T-cell (primary cell): ENCODE measurements at regions of chr16 and their contacts with region 1.

Region 1: GRCh38 chr16:85010931-85011845 is at the start of gene ZDHHC7:
- DNase-seq: peak; percentile 67 to 94 (median 81)
- ATAC-seq: peak; percentile 93 to 96 (median 94)
- H3K4me3 ChIP-seq: peak within 1 kb of the TSS; percentile 97 to 98
- H3K4me3 Mint-ChIP-seq: peak within 1 kb of the TSS; percentile 95 to 97 (median 97)
- H3K27ac ChIP-seq: peak within 1 kb of the TSS; percentile 99
- H3K27ac Mint-ChIP-seq: peak within 1 kb of the TSS; percentile 97
- H3K4me1 ChIP-seq: peaks cover 5 to 24% of the 10 kb centered on the region in 2 experiments
- H3K4me1 Mint-ChIP-seq: peaks cover 40 to 45% (median 44%) of the 10 kb centered on the region in 3 donors
- H3K27me3 ChIP-seq: peaks cover 0 to 3% of the 10 kb centered on the region in 2 experiments
- H3K27me3 Mint-ChIP-seq: no peaks in the 10 kb centered on the region
- total RNA-seq, gene ZDHHC7: 33.5 to 43.9 (median 38.7) TPM

Region 2: GRCh38 chr16:84970447-84971127 is 40.6 kb before region 1 on chr16:
- CTCF ChIA-PET with region 1: interaction called in 1 of 2 experiments, 4 read pairs
- POLR2A ChIA-PET with region 1: interaction called in 1 of 2 experiments, 11 read pairs
- DNase-seq: peak; percentile 46 to 88 (median 70)
- ATAC-seq: peak; percentile 89 to 95 (median 94)
- H3K4me3 ChIP-seq: no peak overlapping the region
- H3K4me3 Mint-ChIP-seq: no peak overlapping the region
- H3K27ac ChIP-seq: no peak overlapping the region
- H3K27ac Mint-ChIP-seq: no peak overlapping the region
- H3K4me1 ChIP-seq: peaks cover 0 to 6% of the 10 kb centered on the region in 2 experiments
- H3K4me1 Mint-ChIP-seq: peaks cover 4 to 6% (median 4%) of the 10 kb centered on the region in 3 donors
- H3K27me3 ChIP-seq: peaks cover 0 to 10% of the 10 kb centered on the region in 2 experiments
- H3K27me3 Mint-ChIP-seq: no peaks in the 10 kb centered on the region

Region 3: DNA sequence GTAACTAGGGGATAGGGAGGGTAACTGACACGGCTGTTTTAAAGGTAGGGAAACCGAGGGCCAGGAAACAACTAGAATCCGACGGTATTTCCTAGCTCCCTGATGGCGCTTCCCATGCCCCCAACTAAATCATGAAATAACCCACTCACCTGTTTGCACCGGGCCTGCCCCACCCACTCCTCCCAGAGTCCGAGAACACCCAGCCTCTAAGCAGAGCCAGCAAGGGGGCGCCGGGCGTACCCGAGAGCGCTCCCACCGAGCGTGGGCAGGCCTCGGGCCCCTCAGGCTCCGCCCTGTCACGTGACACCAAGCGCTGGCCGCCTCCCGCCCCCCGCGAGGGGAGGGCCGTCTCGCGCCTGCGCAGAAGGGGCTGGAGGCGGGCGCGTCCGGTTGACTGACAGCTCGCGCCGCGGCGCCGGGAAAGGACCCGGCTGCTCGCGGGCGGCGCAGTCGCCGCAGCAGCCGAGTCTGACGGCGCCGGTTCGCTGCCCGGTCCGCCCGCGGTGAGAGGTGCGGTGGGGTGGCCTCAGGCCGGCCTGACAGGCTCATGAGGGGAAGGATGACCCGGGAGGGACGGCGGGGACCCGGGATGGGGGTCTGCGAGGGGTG is 16.3 kb after region 1 on chr16 and contains the start of gene KIAA0513:
- CTCF ChIA-PET with region 1: interaction called in 1 of 2 experiments, 10 read pairs
- POLR2A ChIA-PET with region 1: interaction called in 1 of 2 experiments, 19 read pairs
- DNase-seq: peak; percentile 84 to 98 (median 93)
- ATAC-seq: peak; percentile 74 to 82 (median 80)
- H3K4me3 ChIP-seq: peak within 1 kb of the TSS; percentile 60 to 84
- H3K4me3 Mint-ChIP-seq: peak within 1 kb of the TSS; percentile 90 to 91 (median 91)
- H3K27ac ChIP-seq: peak within 1 kb of the TSS; percentile 79
- H3K27ac Mint-ChIP-seq: peak within 1 kb of the TSS; percentile 82 to 92
- H3K4me1 ChIP-seq: peaks cover 17 to 34% of the 10 kb centered on the region in 2 experiments
- H3K4me1 Mint-ChIP-seq: peaks cover 25 to 42% (median 35%) of the 10 kb centered on the region in 3 donors
- H3K27me3 ChIP-seq: no peaks in the 10 kb centered on the region
- H3K27me3 Mint-ChIP-seq: no peaks in the 10 kb centered on the region
- total RNA-seq, gene KIAA0513: 9.2 to 19.7 (median 17.2) TPM

Region 4: GRCh38 chr16:85072947-85073346 is 61.8 kb after region 1 on chr16:
- CTCF ChIA-PET with region 1: no interaction called
- POLR2A ChIA-PET with region 1: no interaction called
- DNase-seq: no peak
- ATAC-seq: no peak
- H3K4me3 ChIP-seq: no peak overlapping the region
- H3K4me3 Mint-ChIP-seq: no peak overlapping the region
- H3K27ac ChIP-seq: no peak overlapping the region
- H3K27ac Mint-ChIP-seq: no peak overlapping the region
- H3K4me1 ChIP-seq: no peaks in the 10 kb centered on the region
- H3K4me1 Mint-ChIP-seq: no peaks in the 10 kb centered on the region
- H3K27me3 ChIP-seq: peaks cover 0 to 3% of the 10 kb centered on the region in 2 experiments
- H3K27me3 Mint-ChIP-seq: no peaks in the 10 kb centered on the region